ENCODE measurements at regions of chr3 and their contacts with region 1.

Region 1: DNA sequence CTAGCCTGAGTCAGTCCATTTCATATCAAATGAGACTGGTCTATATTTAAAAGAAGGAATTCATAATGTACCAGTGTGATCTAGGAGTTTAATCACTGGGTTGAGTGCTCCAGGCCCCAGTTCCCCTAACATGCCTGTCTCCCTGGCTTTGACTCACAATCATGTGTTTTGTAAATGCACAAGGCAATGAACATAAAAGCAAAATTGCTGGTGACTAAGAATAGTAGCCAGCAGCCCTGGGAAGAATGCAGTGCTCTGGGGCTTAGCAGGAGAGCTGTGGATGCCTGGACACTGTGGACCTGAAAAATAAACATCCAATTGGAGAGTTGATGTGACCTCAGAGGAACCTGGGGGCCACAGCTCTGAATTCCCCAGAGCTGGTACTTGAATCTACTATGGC is 50.3 kb downstream of the SYNPR start:
- DNase-seq: peak; percentile 43
- H3K4me3 ChIP-seq: no peak overlapping the region
- H3K27ac ChIP-seq: no peak overlapping the region
- H3K4me1 ChIP-seq: no peaks in the 10 kb centered on the region
- H3K27me3 ChIP-seq: peaks cover 4% of the 10 kb centered on the region
- CTCF ChIP-seq: no peak

Region 2: GRCh38 chr3:62332835-62333244 is 995.5 kb before region 1 on chr3:
- CTCF ChIA-PET with region 1: no interaction called
- dilution Hi-C with region 1: no loop called
- in situ Hi-C with region 1: no loop called
- intact Hi-C with region 1: loop called (anchors 5 kb)
- DNase-seq: peak; percentile 1
- H3K4me3 ChIP-seq: no peak overlapping the region
- H3K27ac ChIP-seq: no peak overlapping the region
- H3K4me1 ChIP-seq: no peaks in the 10 kb centered on the region
- H3K27me3 ChIP-seq: no peaks in the 10 kb centered on the region
- CTCF ChIP-seq: peak; percentile 39 to 52

Region 3: GRCh38 chr3:63287636-63288035 is 40.7 kb before region 1 on chr3:
- CTCF ChIA-PET with region 1: no interaction called
- dilution Hi-C with region 1: loop called (anchors 5 kb)
- in situ Hi-C with region 1: no loop called
- intact Hi-C with region 1: no loop called
- DNase-seq: no peak
- H3K4me3 ChIP-seq: no peak overlapping the region
- H3K27ac ChIP-seq: no peak overlapping the region
- H3K4me1 ChIP-seq: no peaks in the 10 kb centered on the region
- H3K27me3 ChIP-seq: peaks cover 3% of the 10 kb centered on the region
- CTCF ChIP-seq: no peak